Ovary (tissue), 10 donors: ENCODE measurements at regions of chr14 and their contacts with region 1.

Region 1: GRCh38 chr14:68232300-68233055 is 412.9 kb downstream of the RAD51B start:
- DNase-seq: peak in 4 of 5 donors; percentile 43 to 75 (median 68)
- H3K4me3 ChIP-seq: no peak overlapping the region
- H3K27ac ChIP-seq: peak overlapping the region in 1 of 2 donors; percentile 78
- H3K4me1 ChIP-seq: peaks cover 8% of the 10 kb centered on the region
- H3K27me3 ChIP-seq: no peaks in the 10 kb centered on the region
- CTCF ChIP-seq: no peak
- EP300 ChIP-seq: no peak
- POLR2A ChIP-seq: no peak

Region 2: GRCh38 chr14:67951529-67952135 is 280.8 kb before region 1 on chr14:
- intact Hi-C with region 1: loop called in 1 of 4 experiments (anchors 10 kb)
- DNase-seq: no peak
- H3K4me3 ChIP-seq: no peak overlapping the region
- H3K27ac ChIP-seq: no peak overlapping the region
- H3K4me1 ChIP-seq: no peaks in the 10 kb centered on the region
- H3K27me3 ChIP-seq: no peaks in the 10 kb centered on the region
- CTCF ChIP-seq: no peak
- EP300 ChIP-seq: no peak
- POLR2A ChIP-seq: no peak

Region 3: GRCh38 chr14:68140111-68140741 is 92.3 kb before region 1 on chr14:
- intact Hi-C with region 1: loop called in 1 of 4 experiments (anchors 10 kb)
- DNase-seq: peak in 4 of 5 donors; percentile 39 to 84 (median 67)
- H3K4me3 ChIP-seq: no peak overlapping the region
- H3K27ac ChIP-seq: peak overlapping the region in 1 of 2 donors; percentile 81
- H3K4me1 ChIP-seq: peaks cover 25% of the 10 kb centered on the region
- H3K27me3 ChIP-seq: no peaks in the 10 kb centered on the region
- CTCF ChIP-seq: no peak
- EP300 ChIP-seq: peak; percentile 82
- POLR2A ChIP-seq: no peak

Region 4: DNA sequence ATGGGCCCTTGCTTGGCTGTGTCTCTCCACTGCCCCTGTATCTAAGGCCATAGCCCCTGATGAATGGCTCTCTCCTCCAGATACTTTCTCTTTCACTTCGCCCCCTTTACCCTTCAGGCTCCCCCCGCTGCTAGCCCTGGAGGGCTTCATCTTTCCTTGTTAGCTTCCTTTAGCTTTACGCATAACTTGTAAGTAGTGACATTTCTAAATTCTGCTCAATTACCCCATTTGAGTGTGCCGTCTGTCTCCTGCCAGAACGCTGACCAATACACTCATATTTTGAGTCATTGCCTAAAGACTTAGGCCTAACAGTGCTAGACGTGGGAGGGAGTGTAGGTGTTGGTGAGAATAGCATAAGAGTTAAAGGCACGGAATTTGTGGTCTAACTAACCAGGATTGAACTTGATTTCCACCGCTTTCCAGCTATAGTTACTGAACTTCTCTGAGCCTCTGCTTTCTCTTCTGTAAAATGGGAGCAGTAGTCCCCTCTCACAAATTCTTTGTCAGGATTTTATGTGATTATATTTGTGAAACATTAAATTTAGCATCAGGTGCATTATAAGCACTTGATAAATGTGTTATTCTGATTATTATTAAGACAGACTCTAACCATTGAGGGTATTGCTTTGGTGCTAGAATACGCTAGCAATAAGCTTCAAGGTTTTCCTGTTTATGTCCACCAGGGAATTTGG is 431.1 kb after region 1 on chr14:
- intact Hi-C with region 1: no loop called
- DNase-seq: peak in 2 of 5 donors; percentile 7 to 28
- H3K4me3 ChIP-seq: no peak overlapping the region
- H3K27ac ChIP-seq: peak overlapping the region in 1 of 2 donors; percentile 76
- H3K4me1 ChIP-seq: peaks cover 41% of the 10 kb centered on the region
- H3K27me3 ChIP-seq: no peaks in the 10 kb centered on the region
- CTCF ChIP-seq: peak in 1 of 3 donors; percentile 9
- EP300 ChIP-seq: no peak
- POLR2A ChIP-seq: no peak